ENCODE measurements at regions of chr1 and their contacts with region 1.

Region 1: DNA sequence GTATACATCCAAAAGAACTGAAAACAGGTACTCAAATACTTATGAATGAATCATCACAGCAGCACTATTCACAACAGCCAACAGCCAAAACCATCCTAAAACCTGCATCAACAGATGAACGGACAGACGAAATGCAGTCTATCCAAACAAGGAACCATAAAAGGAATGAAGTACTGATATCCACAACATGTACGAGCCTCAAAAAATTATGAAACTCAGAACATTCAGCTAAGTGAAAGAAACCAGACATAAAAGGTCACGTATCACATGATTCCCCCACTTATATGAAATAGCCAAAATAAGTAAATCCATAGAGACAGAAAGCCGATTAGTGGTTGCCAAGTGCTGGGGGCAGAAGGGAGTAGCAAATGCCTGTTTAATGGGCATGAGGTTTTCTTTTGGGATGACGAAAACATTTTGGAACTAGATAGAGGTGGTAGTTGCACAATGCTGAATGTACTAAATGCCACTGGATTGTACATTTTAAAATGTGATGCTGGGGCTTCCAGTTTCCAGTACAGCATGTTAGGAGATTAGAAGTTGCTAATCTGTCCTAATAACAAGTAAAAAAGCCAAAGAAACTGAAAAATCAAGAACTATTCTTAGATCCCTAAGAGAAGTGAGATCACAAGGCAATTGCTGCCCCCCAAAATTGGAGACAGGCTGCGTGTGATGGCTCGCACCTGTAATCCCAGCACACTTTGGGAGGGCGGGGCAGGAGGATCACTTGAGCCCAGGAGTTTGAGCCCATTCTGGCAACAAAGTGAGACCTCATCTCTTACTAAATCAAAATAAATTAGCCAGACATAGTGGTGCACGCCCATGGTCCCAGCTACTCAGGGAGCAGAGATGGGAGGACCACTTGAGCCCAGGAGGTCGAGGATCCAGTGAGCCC is 25.3 kb downstream of the CLSTN1 start:
- DNase-seq: no peak
- H3K4me3 ChIP-seq: no peak overlapping the region
- H3K27ac ChIP-seq: no peak overlapping the region
- H3K4me1 ChIP-seq: peaks cover 0 to 10% (median 4%) of the 10 kb centered on the region in 4 experiments; a peak in 3 of 7 replicates
- H3K27me3 ChIP-seq: no peaks in the 10 kb centered on the region
- CTCF ChIP-seq: no peak
- EP300 ChIP-seq: no peak
- POLR2A ChIP-seq: no peak
- RAD21 ChIP-seq: no peak

Region 2: GRCh38 chr1:9615316-9616063 is 183.0 kb before region 1 on chr1:
- CTCF ChIA-PET with region 1: no interaction called
- POLR2A ChIA-PET with region 1: no interaction called
- DNase-seq: peak; percentile 59 to 86
- H3K4me3 ChIP-seq: no peak overlapping the region
- H3K27ac ChIP-seq: no peak overlapping the region
- H3K4me1 ChIP-seq: no peaks in the 10 kb centered on the region; a peak in 1 of 7 replicates
- H3K27me3 ChIP-seq: no peaks in the 10 kb centered on the region
- CTCF ChIP-seq: peak; percentile 94 to 96 (median 95)
- EP300 ChIP-seq: no peak
- POLR2A ChIP-seq: no peak
- RAD21 ChIP-seq: peak; percentile 68 to 72

Region 3: DNA sequence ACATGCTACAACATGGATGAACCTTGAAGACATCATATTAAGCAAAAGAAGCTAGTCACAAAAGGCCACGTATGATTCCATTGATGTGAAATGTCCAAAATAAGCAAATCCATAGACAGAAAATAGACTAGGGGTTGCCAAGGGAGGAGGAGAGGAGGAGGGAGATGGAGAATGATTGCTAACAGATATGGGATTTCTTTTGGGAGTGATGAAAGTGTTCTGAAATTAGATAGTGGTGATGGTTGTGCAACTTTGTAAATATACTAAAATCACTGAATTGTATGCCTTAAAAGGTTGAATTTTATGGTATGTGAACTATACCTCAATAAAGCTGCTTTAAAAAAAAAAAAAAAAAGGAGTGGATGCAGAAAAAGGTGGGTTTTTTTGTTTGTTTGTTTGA is 17.7 kb after region 1 on chr1:
- CTCF ChIA-PET with region 1: interaction called, 10 read pairs
- POLR2A ChIA-PET with region 1: interaction called, 4 read pairs
- DNase-seq: no peak
- H3K4me3 ChIP-seq: no peak overlapping the region
- H3K27ac ChIP-seq: no peak overlapping the region
- H3K4me1 ChIP-seq: peaks cover 0 to 7% (median 2%) of the 10 kb centered on the region in 4 experiments; a peak in 2 of 7 replicates
- H3K27me3 ChIP-seq: no peaks in the 10 kb centered on the region
- CTCF ChIP-seq: no peak
- EP300 ChIP-seq: no peak
- POLR2A ChIP-seq: no peak
- RAD21 ChIP-seq: no peak